ENCODE measurements at regions of chr6 and their contacts with region 1.

Region 1: DNA sequence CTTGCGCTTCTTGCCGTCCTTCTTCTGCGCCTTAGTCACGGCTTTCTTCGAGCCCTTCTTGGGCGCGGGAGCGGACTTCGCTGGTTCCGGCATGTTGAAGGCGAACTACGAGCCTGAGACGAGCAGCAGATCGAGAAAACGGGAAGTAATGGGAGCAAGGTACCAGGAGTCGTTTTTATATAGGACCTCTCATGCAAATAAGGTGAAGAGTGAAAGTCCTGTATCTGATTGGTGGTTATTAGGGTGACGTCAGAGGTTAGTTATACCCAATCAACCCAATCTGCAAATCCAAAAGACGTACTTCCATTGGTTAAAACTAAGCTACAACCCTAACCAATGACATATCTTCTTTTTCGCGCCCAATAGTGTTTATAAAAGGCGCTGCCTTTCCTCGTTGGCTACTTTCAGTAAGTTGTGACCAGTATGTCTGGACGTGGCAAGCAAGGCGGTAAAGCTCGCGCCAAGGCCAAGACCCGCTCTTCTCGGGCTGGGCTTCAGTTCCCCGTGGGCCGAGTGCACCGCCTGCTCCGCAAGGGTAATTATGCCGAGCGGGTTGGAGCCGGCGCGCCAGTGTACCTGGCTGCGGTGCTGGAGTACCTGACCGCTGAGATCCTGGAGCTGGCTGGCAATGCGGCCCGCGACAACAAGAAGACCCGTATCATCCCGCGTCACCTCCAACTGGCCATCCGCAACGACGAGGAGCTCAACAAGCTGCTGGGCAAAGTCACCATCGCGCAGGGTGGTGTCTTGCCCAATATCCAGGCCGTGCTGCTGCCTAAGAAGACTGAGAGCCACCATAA is 100.6 kb upstream of the PRSS16 start:
- DNase-seq: peak; percentile 91
- ATAC-seq: peak; percentile 64
- H3K4me3 Mint-ChIP-seq: no peak overlapping the region
- H3K27ac Mint-ChIP-seq: no peak overlapping the region
- H3K4me1 Mint-ChIP-seq: peaks cover 35% of the 10 kb centered on the region
- H3K27me3 Mint-ChIP-seq: no peaks in the 10 kb centered on the region

Region 2: GRCh38 chr6:26045065-26045927 is 1101.6 kb before region 1 on chr6:
- CTCF ChIA-PET with region 1: no interaction called
- POLR2A ChIA-PET with region 1: interaction called, 25 read pairs
- DNase-seq: peak; percentile 91
- ATAC-seq: peak; percentile 55
- H3K4me3 Mint-ChIP-seq: peak overlapping the region; percentile 88
- H3K27ac Mint-ChIP-seq: peak overlapping the region; percentile 99
- H3K4me1 Mint-ChIP-seq: peaks cover 43% of the 10 kb centered on the region
- H3K27me3 Mint-ChIP-seq: no peaks in the 10 kb centered on the region

Region 3: GRCh38 chr6:26196846-26197648 is 949.9 kb before region 1 on chr6:
- CTCF ChIA-PET with region 1: no interaction called
- POLR2A ChIA-PET with region 1: interaction called, 59 read pairs
- DNase-seq: peak; percentile 92
- ATAC-seq: peak; percentile 43
- H3K4me3 Mint-ChIP-seq: peak overlapping the region; percentile 99
- H3K27ac Mint-ChIP-seq: peak overlapping the region; percentile 93
- H3K4me1 Mint-ChIP-seq: peaks cover 50% of the 10 kb centered on the region
- H3K27me3 Mint-ChIP-seq: no peaks in the 10 kb centered on the region

Region 4: DNA sequence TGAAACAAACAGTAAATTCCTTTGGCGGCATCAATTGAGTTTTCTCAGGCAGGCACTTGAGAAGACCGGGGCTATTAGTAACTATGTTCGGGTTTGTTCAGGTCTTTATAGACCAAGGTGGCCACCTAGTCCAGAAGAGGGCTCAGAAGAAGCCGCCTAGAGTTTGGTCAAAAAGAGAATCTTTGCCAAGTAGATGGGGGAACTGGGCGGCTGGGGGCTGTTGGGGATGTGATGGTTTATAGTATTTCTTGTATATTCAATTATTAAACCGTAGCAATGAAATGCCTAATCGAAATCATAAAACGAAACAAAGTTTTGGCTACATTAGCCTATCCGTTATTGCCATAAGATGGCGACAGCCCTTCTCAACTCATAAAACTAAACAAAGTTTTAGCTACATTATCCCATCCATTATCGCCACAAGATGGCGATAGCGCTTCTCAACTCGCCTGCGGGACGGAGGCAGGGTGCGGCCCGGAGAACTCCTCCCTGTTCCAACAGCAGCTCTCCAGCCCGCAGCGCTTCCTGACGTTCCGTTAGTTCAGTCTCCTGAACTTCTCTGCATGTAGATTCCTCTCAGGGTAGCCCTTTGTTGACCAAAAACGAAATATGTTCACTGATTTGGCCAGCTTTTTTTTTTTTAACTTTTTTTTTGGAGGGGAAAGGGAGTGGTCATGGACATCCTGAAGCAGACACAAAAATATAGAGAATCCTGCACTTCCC is 19.9 kb before region 1 on chr6:
- CTCF ChIA-PET with region 1: interaction called, 28 read pairs
- POLR2A ChIA-PET with region 1: interaction called, 1,009 read pairs
- DNase-seq: peak; percentile 92
- ATAC-seq: peak; percentile 67
- H3K4me3 Mint-ChIP-seq: peak overlapping the region; percentile 81
- H3K27ac Mint-ChIP-seq: peak overlapping the region; percentile 88
- H3K4me1 Mint-ChIP-seq: peaks cover 54% of the 10 kb centered on the region
- H3K27me3 Mint-ChIP-seq: no peaks in the 10 kb centered on the region

Region 5: GRCh38 chr6:27177485-27178406 is 30.8 kb after region 1 on chr6:
- CTCF ChIA-PET with region 1: no interaction called
- POLR2A ChIA-PET with region 1: interaction called, 27 read pairs
- DNase-seq: peak; percentile 84
- ATAC-seq: peak; percentile 88
- H3K4me3 Mint-ChIP-seq: peak overlapping the region; percentile 92
- H3K27ac Mint-ChIP-seq: peak overlapping the region; percentile 81
- H3K4me1 Mint-ChIP-seq: peaks cover 17% of the 10 kb centered on the region
- H3K27me3 Mint-ChIP-seq: peaks cover 30% of the 10 kb centered on the region

Region 6: GRCh38 chr6:27816906-27817305 is 670.0 kb after region 1 on chr6:
- CTCF ChIA-PET with region 1: no interaction called
- POLR2A ChIA-PET with region 1: interaction called, 545 read pairs
- DNase-seq: no peak
- ATAC-seq: no peak
- H3K4me3 Mint-ChIP-seq: no peak overlapping the region
- H3K27ac Mint-ChIP-seq: peak overlapping the region; percentile 62
- H3K4me1 Mint-ChIP-seq: peaks cover 50% of the 10 kb centered on the region
- H3K27me3 Mint-ChIP-seq: no peaks in the 10 kb centered on the region

Measured in activated CD8-positive, alpha-beta T cell treated with anti-CD3 and anti-CD28 coated beads, Interleukin-2, amount 10 ng/mL, durations not matched to agents 7 days and 5 days (primary cell).